Left cardiac atrium (tissue), 4 donors: ENCODE measurements at regions of chr5 and their contacts with region 1.

Region 1: GRCh38 chr5:23139338-23140171 is 286.4 kb upstream of the CDH12 start:
- DNase-seq: no peak
- ATAC-seq: no peak

Region 2: DNA sequence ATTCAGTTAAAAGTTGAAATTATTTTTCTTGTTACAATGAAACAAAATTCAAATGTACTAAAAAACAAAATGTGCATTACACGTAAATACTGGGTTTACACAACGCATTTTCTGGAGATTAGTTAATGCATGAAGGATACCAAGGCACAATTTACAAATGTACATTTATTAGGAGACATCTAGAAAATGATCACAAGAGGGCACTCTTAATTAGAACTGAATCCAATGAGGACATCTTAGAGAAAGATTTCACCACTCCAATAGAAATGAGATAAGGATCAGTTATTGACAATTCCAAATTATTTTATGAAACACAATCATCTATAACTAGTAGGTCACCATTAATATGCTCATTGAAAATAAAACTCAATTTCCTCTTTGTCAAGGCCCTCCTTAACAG is 249.8 kb before region 1 on chr5:
- intact Hi-C with region 1: loop called in 1 of 2 experiments (anchors 2 kb)
- DNase-seq: no peak
- ATAC-seq: no peak

Region 3: GRCh38 chr5:23026252-23027170 is 113.0 kb before region 1 on chr5:
- intact Hi-C with region 1: loop called in 1 of 2 experiments (anchors 10 kb)
- DNase-seq: no peak
- ATAC-seq: peak; percentile 12 to 15

Region 4: DNA sequence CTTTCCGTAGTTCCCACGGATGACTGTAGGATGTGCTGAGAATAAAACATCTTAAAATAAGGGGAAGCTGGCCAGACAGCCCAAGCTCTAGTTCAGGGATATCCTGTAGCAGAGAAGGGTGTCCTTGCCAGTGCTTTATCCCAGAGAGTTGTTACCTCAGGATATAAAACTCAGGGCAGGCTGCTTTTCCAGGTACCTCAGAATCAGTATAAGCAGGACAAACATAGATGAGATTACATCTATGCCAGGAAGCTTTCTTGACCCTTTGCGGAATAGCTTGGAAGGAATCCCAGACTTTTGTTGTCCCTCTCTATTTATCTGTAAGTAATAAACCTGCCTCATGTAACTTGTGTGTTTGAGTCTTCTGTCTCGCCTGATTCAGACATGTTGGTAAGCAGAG is 933.6 kb after region 1 on chr5:
- intact Hi-C with region 1: no loop called
- DNase-seq: no peak
- ATAC-seq: no peak